SK-N-SH (cell line): ENCODE measurements at regions of chr1 and their contacts with region 1.

Region 1: DNA sequence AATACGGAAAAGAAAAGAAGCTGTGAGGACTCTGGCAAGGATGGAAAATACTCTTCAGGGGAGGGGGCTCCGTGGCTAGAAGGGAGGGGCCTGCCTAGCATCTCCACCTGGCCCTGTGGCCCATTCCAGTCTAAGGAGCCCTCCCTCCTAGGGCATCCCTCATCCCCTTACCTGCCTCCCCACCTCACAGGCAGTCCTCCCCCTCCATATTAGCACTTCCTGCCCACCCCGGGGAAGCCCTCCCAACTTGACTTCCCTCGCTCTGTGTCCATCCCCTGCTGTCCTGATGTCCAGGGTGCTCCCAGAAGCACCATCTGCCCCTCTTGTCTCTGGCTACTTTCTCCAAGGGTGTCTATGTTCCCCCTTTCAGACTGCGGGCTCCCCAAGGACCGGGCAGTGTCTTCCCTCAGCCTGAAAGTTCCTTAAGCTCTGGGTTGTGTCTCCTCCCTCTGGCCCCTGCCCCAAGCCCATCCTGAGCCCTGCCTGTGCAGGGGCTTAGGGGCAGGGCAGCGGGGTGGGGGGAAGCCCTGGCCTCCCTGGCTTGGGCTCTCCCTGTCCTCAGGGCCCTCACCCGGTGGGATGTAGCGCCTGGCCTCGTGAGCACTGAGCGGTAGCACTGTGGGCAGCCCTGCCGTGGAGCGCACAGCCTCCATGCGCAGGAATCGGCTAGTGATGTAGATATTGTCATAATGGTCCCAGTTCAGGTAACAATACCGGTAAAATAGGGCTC is 3.9 kb downstream of the DCST2 start:
- DNase-seq: no peak
- H3K4me3 ChIP-seq: no peak overlapping the region
- H3K27ac ChIP-seq: no peak overlapping the region
- H3K4me1 ChIP-seq: no peaks in the 10 kb centered on the region
- H3K27me3 ChIP-seq: no peaks in the 10 kb centered on the region
- CTCF ChIP-seq: no peak
- EP300 ChIP-seq: no peak
- RAD21 ChIP-seq: no peak

Region 2: GRCh38 chr1:155044812-155045690 is 15.4 kb after region 1 on chr1:
- CTCF ChIA-PET with region 1: interaction called, 12 read pairs
- POLR2A ChIA-PET with region 1: no interaction called
- DNase-seq: peak; percentile 84
- H3K4me3 ChIP-seq: no peak overlapping the region
- H3K27ac ChIP-seq: no peak overlapping the region; a peak in 1 of 4 replicates
- H3K4me1 ChIP-seq: peaks cover 11 to 27% of the 10 kb centered on the region in 2 experiments; a peak in 3 of 4 replicates
- H3K27me3 ChIP-seq: no peaks in the 10 kb centered on the region
- CTCF ChIP-seq: peak; percentile 81
- EP300 ChIP-seq: no peak
- RAD21 ChIP-seq: peak; percentile 84

Region 3: GRCh38 chr1:155127105-155127964 is 97.7 kb after region 1 on chr1 and contains the start of gene EFNA1:
- CTCF ChIA-PET with region 1: no interaction called
- POLR2A ChIA-PET with region 1: no interaction called
- DNase-seq: peak; percentile 84
- H3K4me3 ChIP-seq: peak within 1 kb of the TSS; percentile 63 to 67
- H3K27ac ChIP-seq: peak within 1 kb of the TSS in 1 of 2 experiments; percentile 77; a peak in 2 of 4 replicates
- H3K4me1 ChIP-seq: peaks cover 19 to 45% of the 10 kb centered on the region in 2 experiments
- H3K27me3 ChIP-seq: no peaks in the 10 kb centered on the region
- CTCF ChIP-seq: no peak
- EP300 ChIP-seq: no peak
- RAD21 ChIP-seq: no peak
- polyA plus RNA-seq, gene EFNA1: 14.4 and 15.3 TPM in 2 replicates